B cell (primary cell): ENCODE measurements at regions of chr1 and their contacts with region 1.

Region 1: GRCh38 chr1:110495926-110496600 is 22.9 kb downstream of the KCNA10 start:
- DNase-seq: peak; percentile 84
- ATAC-seq: peak; percentile 84
- H3K4me3 ChIP-seq: no peak overlapping the region
- H3K4me3 Mint-ChIP-seq: no peak overlapping the region
- H3K27ac ChIP-seq: no peak overlapping the region
- H3K27ac Mint-ChIP-seq: no peak overlapping the region
- H3K4me1 ChIP-seq: no peaks in the 10 kb centered on the region
- H3K4me1 Mint-ChIP-seq: no peaks in the 10 kb centered on the region
- H3K27me3 ChIP-seq: no peaks in the 10 kb centered on the region
- H3K27me3 Mint-ChIP-seq: no peaks in the 10 kb centered on the region
- CTCF ChIP-seq: peak; percentile 98

Region 2: GRCh38 chr1:109532365-109533136 is 963.5 kb before region 1 on chr1:
- CTCF ChIA-PET with region 1: no interaction called
- POLR2A ChIA-PET with region 1: no interaction called
- intact Hi-C with region 1: no loop called
- DNase-seq: peak; percentile 88
- ATAC-seq: peak; percentile 90
- H3K4me3 ChIP-seq: peak overlapping the region in 4 of 5 experiments; percentile 37 to 67 (median 52)
- H3K4me3 Mint-ChIP-seq: peak overlapping the region; percentile 90
- H3K27ac ChIP-seq: peak overlapping the region in 1 of 2 donors; percentile 21
- H3K27ac Mint-ChIP-seq: peak overlapping the region; percentile 87
- H3K4me1 ChIP-seq: peaks cover 4 to 11% of the 10 kb centered on the region in 2 donors
- H3K4me1 Mint-ChIP-seq: peaks cover 11% of the 10 kb centered on the region
- H3K27me3 ChIP-seq: no peaks in the 10 kb centered on the region
- H3K27me3 Mint-ChIP-seq: no peaks in the 10 kb centered on the region
- CTCF ChIP-seq: peak; percentile 93

Region 3: DNA sequence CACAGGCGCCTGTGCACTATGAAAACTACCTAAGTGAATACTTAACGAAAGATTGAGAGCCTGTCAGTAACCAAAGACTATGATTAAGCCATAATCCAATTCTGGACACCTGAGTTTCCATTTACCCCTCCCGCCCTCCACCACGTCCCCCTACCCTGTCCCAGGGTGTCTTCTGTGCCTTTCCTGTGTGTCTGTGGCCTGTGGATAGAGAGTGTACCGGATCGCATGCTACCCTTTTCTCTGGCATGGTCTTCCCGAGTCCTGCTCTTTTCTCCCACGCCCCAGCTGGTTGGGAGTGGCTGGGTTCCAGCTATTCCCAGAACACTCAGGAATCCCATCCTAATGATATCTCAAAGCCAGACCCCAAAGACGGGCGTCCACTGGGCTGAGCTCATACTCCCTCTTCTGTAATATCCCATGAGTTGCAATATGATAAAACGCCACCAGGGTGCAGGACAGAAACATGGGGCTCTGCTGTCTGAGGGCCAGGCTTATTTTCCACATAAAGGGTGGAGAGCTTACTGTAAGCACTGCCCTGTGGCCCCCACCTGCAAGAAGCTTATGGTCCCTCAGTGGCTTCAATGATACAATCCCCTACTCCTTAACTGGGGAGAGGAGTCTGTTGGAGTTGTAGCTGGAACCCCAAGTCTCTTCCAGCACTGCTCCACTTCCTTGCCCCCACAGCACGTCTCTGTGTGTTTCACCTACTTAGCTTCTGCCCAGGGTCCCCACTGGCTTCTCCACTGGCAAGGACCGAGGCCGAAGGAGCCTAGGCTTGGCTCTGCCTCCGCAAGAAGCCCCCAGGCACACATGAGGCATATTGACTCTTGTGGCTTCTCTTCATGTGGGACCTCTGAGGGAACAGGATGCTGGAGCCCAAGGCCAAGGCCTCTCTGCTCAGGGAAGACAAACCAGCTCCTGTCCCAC is 408.0 kb before region 1 on chr1:
- CTCF ChIA-PET with region 1: interaction called, 17 read pairs
- POLR2A ChIA-PET with region 1: no interaction called
- intact Hi-C with region 1: no loop called
- DNase-seq: peak; percentile 72
- ATAC-seq: peak; percentile 59
- H3K4me3 ChIP-seq: no peak overlapping the region
- H3K4me3 Mint-ChIP-seq: no peak overlapping the region
- H3K27ac ChIP-seq: no peak overlapping the region
- H3K27ac Mint-ChIP-seq: no peak overlapping the region
- H3K4me1 ChIP-seq: peaks cover 10 to 18% of the 10 kb centered on the region in 2 donors
- H3K4me1 Mint-ChIP-seq: peaks cover 11% of the 10 kb centered on the region
- H3K27me3 ChIP-seq: peaks cover 0 to 47% (median 19%) of the 10 kb centered on the region in 4 experiments
- H3K27me3 Mint-ChIP-seq: peaks cover 48% of the 10 kb centered on the region
- CTCF ChIP-seq: peak; percentile 79

Region 4: GRCh38 chr1:110203021-110203661 is 292.9 kb before region 1 on chr1:
- CTCF ChIA-PET with region 1: interaction called, 531 read pairs
- POLR2A ChIA-PET with region 1: no interaction called
- intact Hi-C with region 1: loop called (anchors 1 kb)
- DNase-seq: peak; percentile 84
- ATAC-seq: peak; percentile 71
- H3K4me3 ChIP-seq: no peak overlapping the region
- H3K4me3 Mint-ChIP-seq: no peak overlapping the region
- H3K27ac ChIP-seq: no peak overlapping the region
- H3K27ac Mint-ChIP-seq: no peak overlapping the region
- H3K4me1 ChIP-seq: peaks cover 3 to 7% of the 10 kb centered on the region in 2 donors
- H3K4me1 Mint-ChIP-seq: peaks cover 11% of the 10 kb centered on the region
- H3K27me3 ChIP-seq: no peaks in the 10 kb centered on the region
- H3K27me3 Mint-ChIP-seq: no peaks in the 10 kb centered on the region
- CTCF ChIP-seq: peak; percentile 91

Region 5: GRCh38 chr1:110312188-110313121 is 183.6 kb before region 1 on chr1:
- CTCF ChIA-PET with region 1: interaction called, 38 read pairs
- POLR2A ChIA-PET with region 1: no interaction called
- intact Hi-C with region 1: loop called (anchors 1 kb)
- DNase-seq: peak; percentile 81
- ATAC-seq: peak; percentile 95
- H3K4me3 ChIP-seq: no peak overlapping the region
- H3K4me3 Mint-ChIP-seq: no peak overlapping the region
- H3K27ac ChIP-seq: no peak overlapping the region
- H3K27ac Mint-ChIP-seq: no peak overlapping the region
- H3K4me1 ChIP-seq: peaks cover 0 to 4% of the 10 kb centered on the region in 2 donors
- H3K4me1 Mint-ChIP-seq: no peaks in the 10 kb centered on the region
- H3K27me3 ChIP-seq: no peaks in the 10 kb centered on the region
- H3K27me3 Mint-ChIP-seq: no peaks in the 10 kb centered on the region
- CTCF ChIP-seq: peak; percentile 89

Region 6: GRCh38 chr1:110390692-110391245 is 105.3 kb before region 1 on chr1 and contains the start of gene SLC16A4:
- CTCF ChIA-PET with region 1: no interaction called
- POLR2A ChIA-PET with region 1: no interaction called
- intact Hi-C with region 1: no loop called
- DNase-seq: no peak
- ATAC-seq: no peak
- H3K4me3 ChIP-seq: no peak within 1 kb of the TSS
- H3K4me3 Mint-ChIP-seq: no peak within 1 kb of the TSS
- H3K27ac ChIP-seq: no peak within 1 kb of the TSS
- H3K27ac Mint-ChIP-seq: no peak within 1 kb of the TSS
- H3K4me1 ChIP-seq: peaks cover 14 to 27% of the 10 kb centered on the region in 2 donors
- H3K4me1 Mint-ChIP-seq: peaks cover 25% of the 10 kb centered on the region
- H3K27me3 ChIP-seq: no peaks in the 10 kb centered on the region
- H3K27me3 Mint-ChIP-seq: no peaks in the 10 kb centered on the region
- CTCF ChIP-seq: no peak
- total RNA-seq, gene SLC16A4: 1.9 and 2.6 TPM in 2 replicates

Region 7: GRCh38 chr1:110412576-110412975 is 83.5 kb before region 1 on chr1:
- CTCF ChIA-PET with region 1: interaction called, 39 read pairs
- POLR2A ChIA-PET with region 1: no interaction called
- intact Hi-C with region 1: loop called (anchors 1 kb)
- DNase-seq: peak; percentile 80
- ATAC-seq: peak; percentile 52
- H3K4me3 ChIP-seq: no peak overlapping the region
- H3K4me3 Mint-ChIP-seq: peak overlapping the region; percentile 77
- H3K27ac ChIP-seq: no peak overlapping the region
- H3K27ac Mint-ChIP-seq: peak overlapping the region; percentile 78
- H3K4me1 ChIP-seq: peaks cover 8 to 18% of the 10 kb centered on the region in 2 donors
- H3K4me1 Mint-ChIP-seq: peaks cover 29% of the 10 kb centered on the region
- H3K27me3 ChIP-seq: no peaks in the 10 kb centered on the region
- H3K27me3 Mint-ChIP-seq: no peaks in the 10 kb centered on the region
- CTCF ChIP-seq: peak; percentile 90

Region 8: GRCh38 chr1:110472546-110472945 is 23.5 kb before region 1 on chr1:
- CTCF ChIA-PET with region 1: interaction called, 12 read pairs
- POLR2A ChIA-PET with region 1: no interaction called
- intact Hi-C with region 1: no loop called
- DNase-seq: no peak
- ATAC-seq: no peak
- H3K4me3 ChIP-seq: no peak overlapping the region
- H3K4me3 Mint-ChIP-seq: no peak overlapping the region
- H3K27ac ChIP-seq: no peak overlapping the region
- H3K27ac Mint-ChIP-seq: no peak overlapping the region
- H3K4me1 ChIP-seq: no peaks in the 10 kb centered on the region
- H3K4me1 Mint-ChIP-seq: no peaks in the 10 kb centered on the region
- H3K27me3 ChIP-seq: peaks cover 0 to 3% (median 0%) of the 10 kb centered on the region in 4 experiments
- H3K27me3 Mint-ChIP-seq: peaks cover 35% of the 10 kb centered on the region
- CTCF ChIP-seq: no peak